Activated naive CD4-positive, alpha-beta T cell treated with anti-CD3 and anti-CD28 coated beads, Interleukin-2, amount 10 ng/mL, durations not matched to agents 7 days and 5 days (primary cell): ENCODE measurements at regions of chr7 and their contacts with region 1.

Region 1: DNA sequence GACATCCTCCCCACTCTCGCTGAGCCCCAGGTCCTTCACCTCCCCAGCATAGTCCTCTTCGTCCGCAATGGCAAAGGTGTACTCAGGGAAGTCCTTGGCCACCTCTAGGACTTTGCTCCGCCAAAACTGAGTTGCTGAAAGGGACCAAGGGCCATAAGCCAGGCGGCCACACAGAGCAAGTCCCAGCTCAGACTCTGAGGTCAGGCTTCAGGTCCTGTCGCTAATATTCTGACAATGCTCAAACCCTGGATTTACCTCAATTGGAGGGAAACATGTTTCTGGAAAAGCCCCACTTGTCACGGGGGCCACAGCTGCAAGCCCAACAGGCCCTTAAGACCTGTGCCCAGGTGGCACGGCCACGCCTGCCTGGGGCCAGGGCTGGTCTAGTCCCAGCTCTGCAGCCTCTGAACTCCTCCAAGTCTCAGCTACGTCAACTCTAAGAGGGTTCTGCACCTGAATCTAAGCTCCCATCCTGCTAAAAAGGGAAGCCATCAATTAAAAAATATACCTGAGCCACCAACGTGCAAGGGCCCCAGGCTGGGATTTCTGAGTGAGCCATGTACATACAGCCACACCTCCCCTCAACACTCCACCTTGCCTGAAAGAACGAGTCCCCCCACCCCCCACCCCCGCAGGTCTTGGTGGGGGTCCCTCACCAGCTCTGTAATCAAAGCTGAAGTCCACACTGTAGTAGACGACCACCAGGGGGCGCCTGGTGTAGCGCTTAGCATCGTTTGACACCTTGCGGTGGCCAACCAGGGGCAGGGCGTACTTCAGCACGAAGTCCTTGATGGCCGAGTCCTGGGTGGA is 22.9 kb downstream of the PDIA4 start:
- DNase-seq: peak; percentile 89
- H3K4me3 Mint-ChIP-seq: no peak overlapping the region
- H3K27ac Mint-ChIP-seq: peak overlapping the region; percentile 80
- H3K4me1 Mint-ChIP-seq: peaks cover 2% of the 10 kb centered on the region
- H3K27me3 Mint-ChIP-seq: no peaks in the 10 kb centered on the region

Region 2: GRCh38 chr7:148987010-148987750 is 18.3 kb before region 1 on chr7:
- CTCF ChIA-PET with region 1: interaction called, 16 read pairs
- DNase-seq: peak; percentile 89
- H3K4me3 Mint-ChIP-seq: peak overlapping the region; percentile 94
- H3K27ac Mint-ChIP-seq: peak overlapping the region; percentile 90
- H3K4me1 Mint-ChIP-seq: peaks cover 54% of the 10 kb centered on the region
- H3K27me3 Mint-ChIP-seq: peaks cover 44% of the 10 kb centered on the region

Region 3: GRCh38 chr7:149027611-149028345 is 22.3 kb after region 1 on chr7:
- CTCF ChIA-PET with region 1: interaction called, 16 read pairs
- DNase-seq: no peak
- H3K4me3 Mint-ChIP-seq: peak overlapping the region; percentile 95
- H3K27ac Mint-ChIP-seq: peak overlapping the region; percentile 95
- H3K4me1 Mint-ChIP-seq: peaks cover 49% of the 10 kb centered on the region
- H3K27me3 Mint-ChIP-seq: no peaks in the 10 kb centered on the region

Region 4: GRCh38 chr7:149071641-149072437 is 66.4 kb after region 1 on chr7:
- CTCF ChIA-PET with region 1: interaction called, 85 read pairs
- DNase-seq: peak; percentile 32
- H3K4me3 Mint-ChIP-seq: no peak overlapping the region
- H3K27ac Mint-ChIP-seq: no peak overlapping the region
- H3K4me1 Mint-ChIP-seq: peaks cover 11% of the 10 kb centered on the region
- H3K27me3 Mint-ChIP-seq: no peaks in the 10 kb centered on the region

Region 5: DNA sequence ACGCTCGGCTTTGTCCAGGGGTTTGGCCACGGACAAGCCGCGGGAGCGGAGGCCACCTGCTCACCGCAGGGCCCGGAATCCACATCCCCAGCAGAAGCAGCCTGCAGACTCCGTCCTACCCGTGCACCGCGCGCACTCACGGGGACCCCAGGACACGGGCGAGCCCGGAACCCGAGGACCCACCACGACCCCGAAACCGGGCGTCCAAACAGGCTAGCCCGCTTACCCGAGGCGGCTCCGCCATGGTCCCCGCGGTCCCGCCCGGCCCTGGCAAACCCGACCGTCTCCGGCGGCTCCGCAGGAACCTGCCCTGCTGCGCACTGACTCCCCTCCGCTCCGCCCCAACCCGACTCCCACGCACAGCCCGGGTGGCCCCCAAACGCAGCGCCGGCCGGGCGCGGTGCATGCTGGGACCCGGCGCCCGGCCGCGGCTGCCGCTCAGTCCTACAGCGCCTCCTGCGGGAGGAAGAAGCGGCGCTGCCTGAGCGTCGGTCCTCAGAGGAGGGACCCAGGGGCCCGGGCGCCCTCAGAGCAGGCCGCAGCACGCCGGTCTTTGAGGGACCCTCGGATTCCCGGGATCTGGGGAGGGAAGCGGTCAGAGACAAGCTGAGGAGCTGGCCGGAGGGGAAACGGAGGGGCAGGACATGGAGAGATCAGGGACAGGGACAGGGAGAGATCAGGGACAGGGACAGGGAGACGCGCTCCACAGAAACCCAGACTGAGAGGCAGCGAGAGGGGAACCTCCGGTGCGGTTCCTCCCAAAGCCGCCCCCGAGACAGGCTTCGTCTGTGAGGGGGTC is 85.2 kb after region 1 on chr7 and contains the start of gene ZNF786:
- CTCF ChIA-PET with region 1: interaction called, 10 read pairs
- DNase-seq: peak; percentile 93
- H3K4me3 Mint-ChIP-seq: peak within 1 kb of the TSS; percentile 90
- H3K27ac Mint-ChIP-seq: peak within 1 kb of the TSS; percentile 98
- H3K4me1 Mint-ChIP-seq: peaks cover 20% of the 10 kb centered on the region
- H3K27me3 Mint-ChIP-seq: no peaks in the 10 kb centered on the region